ENCODE measurements at regions of chr9 and their contacts with region 1.

Region 1: DNA sequence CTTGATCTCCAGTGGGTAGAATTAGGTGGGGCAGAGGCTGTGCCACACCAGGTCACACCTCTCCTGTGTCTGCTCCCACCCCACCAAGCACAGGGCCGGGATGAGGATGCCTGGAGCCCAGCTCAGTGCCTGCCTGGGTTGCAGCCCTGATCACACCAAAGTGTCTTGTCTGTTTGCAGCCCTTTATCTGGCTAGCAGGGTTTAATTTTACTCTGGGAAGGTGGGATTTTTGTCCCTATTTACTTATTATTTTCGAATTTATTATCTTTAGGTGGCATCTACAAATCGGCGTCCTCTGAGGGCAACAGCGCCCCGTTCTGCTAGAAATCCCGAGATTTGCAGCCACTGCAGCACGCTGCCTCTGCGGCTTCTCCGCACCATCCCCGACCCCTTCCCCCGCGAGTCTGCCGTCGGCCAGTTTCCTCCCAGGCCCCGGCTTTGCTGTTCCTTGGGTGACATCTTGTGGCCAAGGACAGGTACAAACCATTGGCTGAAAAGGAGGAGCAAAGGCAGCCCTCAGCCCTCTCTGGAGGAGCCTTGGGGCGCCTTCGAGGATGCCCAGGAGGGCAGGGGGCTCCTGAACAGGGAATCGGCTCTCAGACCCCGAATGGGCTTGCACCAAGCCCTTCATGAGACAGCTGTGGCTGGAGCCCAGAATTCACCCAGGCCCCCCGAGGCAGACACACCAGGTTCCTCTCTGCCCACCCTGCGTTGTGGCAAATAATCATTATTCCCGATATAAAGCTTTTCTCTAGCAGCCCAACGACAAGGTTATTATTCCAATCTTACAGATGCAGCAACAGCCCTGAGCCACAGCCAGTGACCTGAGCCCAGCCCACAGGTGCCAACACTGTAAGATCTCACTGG is 113.0 kb downstream of the GAPVD1 start:
- DNase-seq: no peak
- H3K4me3 ChIP-seq: peak overlapping the region; percentile 50
- CTCF ChIP-seq: peak; percentile 84

Region 2: GRCh38 chr9:125361837-125362531 is 12.7 kb before region 1 on chr9:
- CTCF ChIA-PET with region 1: interaction called, 26 read pairs
- POLR2A ChIA-PET with region 1: no interaction called
- DNase-seq: no peak
- H3K4me3 ChIP-seq: no peak overlapping the region
- CTCF ChIP-seq: peak; percentile 16

Region 3: GRCh38 chr9:125405938-125406809 is 31.5 kb after region 1 on chr9:
- CTCF ChIA-PET with region 1: no interaction called
- POLR2A ChIA-PET with region 1: no interaction called
- DNase-seq: no peak
- H3K4me3 ChIP-seq: no peak overlapping the region
- CTCF ChIP-seq: no peak

Region 4: GRCh38 chr9:125418404-125418803 is 43.7 kb after region 1 on chr9:
- CTCF ChIA-PET with region 1: no interaction called
- POLR2A ChIA-PET with region 1: no interaction called
- DNase-seq: no peak
- H3K4me3 ChIP-seq: no peak overlapping the region
- CTCF ChIP-seq: no peak

Region 5: GRCh38 chr9:125593585-125594229 is 219.0 kb after region 1 on chr9:
- CTCF ChIA-PET with region 1: no interaction called
- POLR2A ChIA-PET with region 1: no interaction called
- DNase-seq: no peak
- H3K4me3 ChIP-seq: no peak overlapping the region
- CTCF ChIP-seq: no peak

Region 6: DNA sequence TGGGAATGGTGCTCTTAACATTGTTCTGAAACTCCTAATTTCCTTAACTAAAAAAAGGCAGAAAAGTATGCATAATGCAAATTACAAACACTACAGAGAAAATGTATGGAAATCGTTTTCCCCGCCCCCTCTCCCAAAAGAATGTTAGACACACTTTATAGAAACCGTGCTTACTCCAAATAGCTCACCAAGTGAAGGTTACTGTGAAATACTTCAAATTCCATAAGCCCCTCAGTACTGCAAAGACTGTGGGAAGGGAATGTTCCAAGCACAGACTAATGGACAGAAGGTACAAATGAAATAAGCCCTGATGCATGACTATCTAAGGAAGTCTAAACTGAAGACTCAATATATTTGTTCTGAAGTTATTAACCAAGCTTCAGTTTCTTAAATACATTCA is 319.8 kb after region 1 on chr9:
- CTCF ChIA-PET with region 1: no interaction called
- POLR2A ChIA-PET with region 1: no interaction called
- DNase-seq: no peak
- H3K4me3 ChIP-seq: no peak overlapping the region
- CTCF ChIP-seq: no peak

Measured in AG04449 (cell line).